ENCODE measurements at regions of chr1 and their contacts with region 1.

Region 1: GRCh38 chr1:1231400-1232223 is at the start of gene SDF4:
- DNase-seq: peak; percentile 95 to 99 (median 97)

Region 2: GRCh38 chr1:1115786-1116700 is 115.6 kb before region 1 on chr1 and contains the start of gene C1orf159:
- intact Hi-C with region 1: loop called (anchors 1 kb)
- DNase-seq: peak; percentile 97 to 100 (median 99)

Region 3: DNA sequence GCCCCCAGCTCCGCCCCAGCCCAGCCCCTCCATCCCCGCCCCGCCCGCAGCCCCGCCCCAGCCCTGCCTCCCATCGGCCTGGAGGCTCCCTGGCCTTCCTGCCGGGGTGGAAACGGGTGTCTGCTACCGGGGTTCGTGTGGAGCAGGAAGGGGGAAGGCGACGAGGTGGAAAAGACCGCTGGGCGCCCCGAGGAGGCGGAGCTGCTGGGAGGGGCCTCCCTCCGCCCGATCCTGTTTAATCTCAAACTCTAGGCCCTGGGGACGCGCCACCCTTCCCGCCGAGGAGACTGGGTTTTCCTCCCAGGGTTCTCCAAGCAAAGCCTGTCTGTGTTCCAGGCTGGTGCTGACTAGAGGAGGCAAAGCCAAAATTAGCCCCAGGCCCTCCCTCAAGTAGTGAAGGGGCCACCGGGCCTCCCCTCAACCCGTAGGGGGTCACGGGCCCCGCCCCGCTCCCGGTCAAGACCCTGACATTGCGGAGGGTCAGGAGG is 74.1 kb before region 1 on chr1:
- intact Hi-C with region 1: loop called (anchors 5 kb)
- DNase-seq: peak; percentile 59 to 96 (median 68)

Region 4: GRCh38 chr1:1200851-1201810 is 30.5 kb before region 1 on chr1:
- intact Hi-C with region 1: no loop called
- DNase-seq: peak in 6 of 10 donors; percentile 31 to 93 (median 63)

Region 5: DNA sequence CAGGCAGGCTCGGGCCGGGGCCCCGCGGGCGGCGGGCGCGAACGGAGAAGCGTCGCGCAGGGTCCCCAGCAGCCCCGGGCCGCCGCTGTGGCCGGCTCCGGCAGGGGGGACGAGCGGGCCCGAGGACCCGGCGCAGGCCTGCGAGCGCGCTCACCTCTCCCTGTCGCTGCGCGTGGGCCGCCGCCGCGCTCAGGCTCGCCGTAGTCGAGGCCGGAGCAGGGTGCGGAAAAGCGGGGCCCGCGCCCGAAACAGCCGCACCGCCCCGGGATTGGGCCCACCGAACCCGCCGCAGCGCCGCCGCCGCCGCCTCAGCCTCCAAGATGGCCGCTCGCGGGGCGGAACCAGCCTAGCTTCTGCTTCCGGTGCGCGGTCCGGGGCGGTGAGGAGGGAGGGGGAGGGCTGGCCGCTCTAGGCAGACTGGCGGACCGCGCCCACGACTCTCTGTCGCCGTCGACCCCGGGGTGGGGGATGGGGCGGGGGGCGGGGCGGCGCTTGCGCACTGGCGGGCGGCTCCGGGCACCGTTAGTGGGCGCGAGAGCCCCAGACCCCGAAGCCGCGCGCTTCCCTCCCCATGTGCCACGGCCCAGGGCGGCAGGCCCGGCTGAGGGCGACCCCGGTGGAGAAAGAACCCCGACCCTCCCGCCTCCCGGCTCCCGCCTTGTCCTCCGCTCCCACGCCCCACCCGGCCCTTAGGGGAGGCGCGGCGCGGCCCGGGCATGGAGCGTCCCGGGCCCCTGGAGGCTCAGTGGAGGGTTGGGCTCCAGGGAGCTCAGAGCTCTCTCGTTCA is 42.1 kb after region 1 on chr1 and contains the start of gene UBE2J2:
- intact Hi-C with region 1: loop called (anchors 1 kb)
- DNase-seq: peak; percentile 88 to 99 (median 94)